Endothelial cell of umbilical vein (primary cell): ENCODE measurements at regions of chr22 and their contacts with region 1.

Region 1: DNA sequence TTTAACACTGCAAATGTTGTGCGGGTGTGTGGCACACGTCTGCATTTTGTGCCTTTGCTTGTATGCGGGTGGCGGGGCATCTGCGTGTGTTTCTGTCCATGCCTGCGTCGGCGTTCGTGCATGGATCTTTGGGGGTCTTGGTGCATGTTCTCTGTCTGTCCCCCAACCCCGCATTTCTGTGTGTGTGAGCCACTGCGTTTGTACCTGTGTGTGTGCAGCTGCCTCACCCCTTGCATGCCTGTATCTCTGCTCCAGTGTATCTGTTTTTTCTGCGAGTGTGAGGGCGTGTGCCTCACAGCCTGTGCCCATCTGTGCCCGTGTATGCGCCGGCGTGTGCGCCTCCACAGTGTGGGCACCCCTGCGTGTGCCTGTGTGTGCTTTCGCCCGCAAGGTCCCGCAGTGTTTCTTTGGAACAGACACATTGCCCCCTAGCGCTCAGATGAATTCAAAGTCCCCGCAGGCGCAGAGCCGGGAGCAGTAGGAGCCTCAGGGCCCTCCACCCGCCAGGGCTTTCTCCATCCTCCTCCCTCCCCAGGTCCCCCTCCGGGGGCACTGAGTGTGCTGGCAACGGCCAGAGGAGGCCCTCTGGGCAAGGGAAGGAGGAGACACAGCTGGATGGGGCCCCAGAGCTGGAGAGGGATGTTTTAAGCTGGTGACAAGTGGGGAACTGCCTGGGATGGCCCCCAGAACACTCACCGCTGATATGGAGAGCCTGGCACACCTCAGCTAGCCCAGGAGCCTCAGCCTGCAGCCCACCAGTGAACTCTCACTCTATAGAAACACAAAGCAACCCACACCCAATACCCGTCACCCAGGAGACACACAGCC is 3.1 kb upstream of the MN1 start:
- DNase-seq: peak; percentile 67
- H3K4me3 ChIP-seq: no peak overlapping the region
- H3K27ac ChIP-seq: no peak overlapping the region
- H3K4me1 ChIP-seq: peaks cover 18% of the 10 kb centered on the region
- H3K27me3 ChIP-seq: peaks cover 8 to 9% of the 10 kb centered on the region in 2 experiments
- CTCF ChIP-seq: peak; percentile 64 to 78
- POLR2A ChIP-seq: no peak

Region 2: DNA sequence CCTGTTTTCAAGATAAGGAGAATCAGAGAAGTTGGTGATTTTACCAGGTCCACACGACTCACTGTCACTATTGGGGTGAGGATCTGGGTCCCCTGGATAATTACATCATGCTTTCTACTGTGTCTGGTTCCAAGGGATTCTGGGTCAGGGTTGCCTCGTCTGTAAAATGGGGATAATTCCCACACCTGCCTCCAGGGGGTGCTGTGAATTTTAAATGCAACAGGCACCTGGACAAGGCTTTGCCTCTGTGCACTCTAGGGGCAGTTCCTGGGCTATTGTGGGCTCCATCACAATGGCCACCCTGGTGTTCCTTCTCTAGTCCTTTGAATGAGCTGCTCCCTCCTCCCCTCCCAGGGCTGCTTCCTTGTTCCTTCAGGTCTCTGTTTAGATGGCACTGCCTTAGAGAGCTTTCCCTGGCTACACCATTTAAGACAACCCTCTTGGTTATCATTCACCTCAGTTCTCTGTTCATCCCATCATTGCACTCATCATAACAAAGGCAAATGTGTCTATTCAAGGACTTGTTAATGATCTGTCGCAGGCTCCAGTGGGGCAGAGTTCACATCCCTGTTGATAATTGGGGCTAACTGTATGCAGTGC is 968.7 kb before region 1 on chr22:
- CTCF ChIA-PET with region 1: interaction called, 3 read pairs
- POLR2A ChIA-PET with region 1: no interaction called
- dilution Hi-C with region 1: no loop called
- intact Hi-C with region 1: loop called (anchors 5 kb)
- DNase-seq: peak; percentile 42
- H3K4me3 ChIP-seq: no peak overlapping the region
- H3K27ac ChIP-seq: no peak overlapping the region
- H3K4me1 ChIP-seq: no peaks in the 10 kb centered on the region
- H3K27me3 ChIP-seq: no peaks in the 10 kb centered on the region
- CTCF ChIP-seq: peak; percentile 51 to 71
- POLR2A ChIP-seq: no peak

Region 3: GRCh38 chr22:27331526-27332281 is 473.0 kb before region 1 on chr22:
- CTCF ChIA-PET with region 1: no interaction called
- POLR2A ChIA-PET with region 1: no interaction called
- dilution Hi-C with region 1: no loop called
- intact Hi-C with region 1: loop called (anchors 5 kb)
- DNase-seq: peak; percentile 62
- H3K4me3 ChIP-seq: no peak overlapping the region
- H3K27ac ChIP-seq: no peak overlapping the region
- H3K4me1 ChIP-seq: no peaks in the 10 kb centered on the region
- H3K27me3 ChIP-seq: peaks cover 5 to 6% of the 10 kb centered on the region in 2 experiments
- CTCF ChIP-seq: peak; percentile 27 to 76
- POLR2A ChIP-seq: no peak

Region 4: GRCh38 chr22:27489176-27489675 is 315.5 kb before region 1 on chr22:
- CTCF ChIA-PET with region 1: no interaction called
- POLR2A ChIA-PET with region 1: no interaction called
- dilution Hi-C with region 1: no loop called
- intact Hi-C with region 1: loop called (anchors 5 kb)
- DNase-seq: peak; percentile 53
- H3K4me3 ChIP-seq: no peak overlapping the region
- H3K27ac ChIP-seq: peak overlapping the region; percentile 7
- H3K4me1 ChIP-seq: peaks cover 8% of the 10 kb centered on the region
- H3K27me3 ChIP-seq: peaks cover 3 to 4% of the 10 kb centered on the region in 2 experiments
- CTCF ChIP-seq: no peak
- POLR2A ChIP-seq: no peak

Region 5: DNA sequence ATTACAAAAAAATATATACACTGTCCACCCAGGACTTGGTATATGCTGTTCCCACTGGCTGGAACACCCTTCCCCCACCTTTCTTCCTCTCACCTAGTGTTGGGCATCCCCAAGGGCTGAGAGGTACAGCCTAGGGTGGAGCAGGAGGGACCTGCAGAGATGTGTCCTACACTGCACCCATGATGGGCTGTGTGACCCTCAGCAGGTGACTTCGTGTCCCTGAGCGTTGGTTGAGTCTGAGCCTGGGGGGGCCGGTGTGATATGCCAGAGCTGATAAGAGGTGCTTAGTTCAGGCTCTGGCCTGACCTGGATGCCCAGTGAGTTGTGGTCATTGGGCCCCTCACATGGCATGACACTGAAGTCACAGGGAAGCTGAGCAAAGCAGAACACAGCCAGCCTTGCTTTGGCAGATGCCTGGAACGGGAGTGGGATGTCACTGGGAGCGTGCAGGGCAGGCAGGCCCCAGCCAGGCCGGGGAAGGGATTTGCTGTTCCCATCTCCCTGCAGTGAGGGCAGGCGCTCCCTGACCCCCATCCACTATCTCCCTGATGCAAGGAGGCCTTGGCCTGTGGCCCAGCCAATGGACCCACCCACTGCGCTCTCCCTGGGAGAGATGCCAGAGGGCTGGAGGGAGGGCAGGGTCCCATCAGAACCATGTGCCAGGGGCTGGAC is 142.2 kb before region 1 on chr22:
- CTCF ChIA-PET with region 1: no interaction called
- POLR2A ChIA-PET with region 1: no interaction called
- dilution Hi-C with region 1: no loop called
- intact Hi-C with region 1: loop called (anchors 5 kb)
- DNase-seq: peak; percentile 61
- H3K4me3 ChIP-seq: no peak overlapping the region
- H3K27ac ChIP-seq: no peak overlapping the region
- H3K4me1 ChIP-seq: peaks cover 13% of the 10 kb centered on the region
- H3K27me3 ChIP-seq: no peaks in the 10 kb centered on the region
- CTCF ChIP-seq: no peak
- POLR2A ChIP-seq: no peak